Gastrocnemius medialis (tissue), 4 donors: ENCODE measurements at regions of chr4 and their contacts with region 1.

Region 1: DNA sequence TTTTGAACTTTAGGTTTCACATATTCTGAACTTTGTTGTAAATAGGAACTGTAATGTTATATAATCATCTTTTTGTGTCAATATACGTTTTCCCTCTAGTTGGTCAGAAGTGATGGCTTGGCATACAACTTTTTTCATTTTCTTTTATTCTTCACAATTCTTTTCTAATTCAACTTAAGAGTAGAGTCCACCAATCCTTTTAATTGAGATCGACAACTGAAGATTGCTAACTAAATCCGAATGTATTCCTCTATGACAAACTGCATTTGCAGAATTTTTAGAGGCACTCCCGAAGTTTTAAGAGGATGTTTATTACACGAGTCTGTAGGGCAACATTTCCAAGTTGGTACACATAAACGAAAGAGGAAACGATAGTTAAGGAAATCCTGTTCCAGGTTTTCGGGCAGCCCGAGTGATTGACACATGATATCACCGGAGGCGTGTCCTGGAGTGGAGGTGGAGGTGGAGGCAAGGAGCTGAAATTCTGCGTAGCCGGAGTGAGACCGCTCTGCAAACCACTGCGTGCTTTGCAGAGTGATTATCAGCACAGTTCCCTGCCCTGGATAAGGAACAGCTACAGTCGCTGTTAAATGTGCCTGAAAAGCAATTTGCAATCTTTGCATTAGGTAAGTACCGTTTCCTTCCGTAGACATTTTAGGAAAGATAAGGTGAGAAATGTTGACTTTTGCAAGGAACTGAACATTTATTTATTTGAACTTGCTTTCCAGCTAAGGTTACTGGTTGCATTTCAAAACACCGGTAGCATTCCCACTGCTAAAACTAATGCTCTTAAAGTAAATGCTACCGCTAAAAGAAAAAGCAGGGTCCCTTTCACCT is at the start of gene SPRY1:
- DNase-seq: peak; percentile 87 to 91
- ATAC-seq: peak; percentile 64 to 66
- H3K4me3 ChIP-seq: peak within 1 kb of the TSS; percentile 82 to 94 (median 88)
- H3K27ac ChIP-seq: peak within 1 kb of the TSS; percentile 91 to 98 (median 96)
- H3K4me1 ChIP-seq: peaks cover 6 to 11% of the 10 kb centered on the region in 2 donors
- H3K27me3 ChIP-seq: no peaks in the 10 kb centered on the region
- CTCF ChIP-seq: no peak
- POLR2A ChIP-seq: peak; percentile 65 to 88
- total RNA-seq, gene SPRY1: 32.8 to 72.2 (median 50.9) TPM

Region 2: GRCh38 chr4:123248085-123248659 is 148.4 kb before region 1 on chr4:
- in situ Hi-C with region 1: no loop called
- intact Hi-C with region 1: loop called (anchors 5 kb)
- DNase-seq: no peak
- ATAC-seq: peak in 1 of 2 donors; percentile 48
- H3K4me3 ChIP-seq: no peak overlapping the region
- H3K27ac ChIP-seq: peak overlapping the region in 1 of 4 donors; percentile 2
- H3K4me1 ChIP-seq: peaks cover 17 to 23% of the 10 kb centered on the region in 2 donors
- H3K27me3 ChIP-seq: no peaks in the 10 kb centered on the region
- CTCF ChIP-seq: no peak
- POLR2A ChIP-seq: no peak

Region 3: DNA sequence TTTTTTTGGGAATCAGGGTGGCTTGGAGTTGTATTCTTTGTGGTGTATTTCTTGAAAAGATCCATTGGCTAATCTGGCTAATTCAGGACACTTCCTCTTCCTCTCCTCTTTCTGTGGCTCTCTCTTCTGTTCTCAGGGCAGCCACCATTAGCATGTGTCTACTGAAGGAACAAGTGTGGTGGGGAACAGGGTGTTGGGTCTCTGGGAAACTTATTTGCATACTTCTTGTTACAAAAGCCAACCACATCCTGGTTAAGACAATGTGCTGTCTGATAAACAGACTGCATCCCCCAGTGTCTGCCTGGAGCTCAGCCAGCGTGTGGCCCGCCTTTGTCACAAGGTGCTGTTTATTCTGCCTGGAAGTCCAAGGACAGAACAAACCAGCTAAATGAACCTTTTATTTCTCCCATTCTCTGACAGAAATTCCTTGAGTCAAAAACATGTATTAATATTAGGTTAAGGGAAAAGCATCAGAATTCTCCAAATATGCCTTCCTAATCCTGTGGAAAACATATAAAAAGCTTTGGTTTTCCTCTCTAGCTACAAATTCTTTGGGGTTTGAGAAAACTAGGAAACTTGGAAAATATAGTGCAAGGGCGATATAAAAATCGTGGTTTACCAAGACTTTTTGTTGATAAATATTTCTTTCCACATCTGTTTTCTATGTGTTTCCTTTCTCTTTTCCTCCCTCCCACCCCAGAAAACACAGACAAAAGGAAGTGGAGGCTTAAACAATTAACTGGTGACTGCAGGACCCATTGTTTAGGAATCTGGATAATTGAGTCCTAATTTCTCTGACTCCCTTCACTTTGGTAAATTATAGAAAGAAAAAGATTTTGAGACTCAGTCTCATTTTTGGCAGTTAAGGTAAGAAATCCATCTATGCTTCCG is 203.6 kb after region 1 on chr4:
- in situ Hi-C with region 1: loop called in 1 of 4 experiments (anchors 10 kb)
- intact Hi-C with region 1: no loop called
- DNase-seq: peak; percentile 28 to 37
- ATAC-seq: peak; percentile 65 to 75
- H3K4me3 ChIP-seq: no peak overlapping the region
- H3K27ac ChIP-seq: peak overlapping the region; percentile 59 to 69 (median 63)
- H3K4me1 ChIP-seq: peaks cover 16 to 17% of the 10 kb centered on the region in 2 donors
- H3K27me3 ChIP-seq: no peaks in the 10 kb centered on the region
- CTCF ChIP-seq: no peak
- POLR2A ChIP-seq: no peak

Region 4: GRCh38 chr4:123671633-123672404 is 275.3 kb after region 1 on chr4:
- in situ Hi-C with region 1: loop called in 3 of 4 experiments (anchors 5 to 25 kb)
- intact Hi-C with region 1: loop called (anchors 2 kb)
- DNase-seq: no peak
- ATAC-seq: no peak
- H3K4me3 ChIP-seq: peak overlapping the region in 1 of 4 donors; percentile 6
- H3K27ac ChIP-seq: peak overlapping the region in 2 of 4 donors; percentile 15 to 70
- H3K4me1 ChIP-seq: peaks cover 12 to 22% of the 10 kb centered on the region in 2 donors
- H3K27me3 ChIP-seq: no peaks in the 10 kb centered on the region
- CTCF ChIP-seq: no peak
- POLR2A ChIP-seq: no peak

Region 5: DNA sequence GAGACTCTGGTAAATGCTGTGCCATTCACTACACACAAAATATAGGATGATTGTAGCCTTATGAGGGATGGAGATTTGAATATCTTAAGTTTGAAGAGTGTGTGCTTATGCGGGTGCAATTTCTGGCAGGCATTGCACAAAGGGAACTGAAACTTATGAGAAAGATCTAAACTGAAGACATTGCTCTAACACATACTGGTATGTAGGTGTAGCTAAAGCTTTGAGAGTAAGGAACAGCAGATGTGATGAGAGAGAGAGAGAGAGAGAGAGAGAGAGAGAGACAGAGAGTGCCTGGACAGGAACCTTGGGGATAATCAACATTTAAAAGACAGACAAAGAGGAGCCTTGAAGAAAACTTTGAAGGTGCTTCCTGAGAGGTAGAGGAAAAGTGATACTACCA is 379.7 kb after region 1 on chr4:
- in situ Hi-C with region 1: no loop called
- intact Hi-C with region 1: no loop called
- DNase-seq: no peak
- ATAC-seq: no peak
- H3K4me3 ChIP-seq: no peak overlapping the region
- H3K27ac ChIP-seq: peak overlapping the region in 3 of 4 donors; percentile 35 to 56 (median 37)
- H3K4me1 ChIP-seq: peaks cover 4 to 6% of the 10 kb centered on the region in 2 donors
- H3K27me3 ChIP-seq: no peaks in the 10 kb centered on the region
- CTCF ChIP-seq: no peak
- POLR2A ChIP-seq: no peak

Region 6: DNA sequence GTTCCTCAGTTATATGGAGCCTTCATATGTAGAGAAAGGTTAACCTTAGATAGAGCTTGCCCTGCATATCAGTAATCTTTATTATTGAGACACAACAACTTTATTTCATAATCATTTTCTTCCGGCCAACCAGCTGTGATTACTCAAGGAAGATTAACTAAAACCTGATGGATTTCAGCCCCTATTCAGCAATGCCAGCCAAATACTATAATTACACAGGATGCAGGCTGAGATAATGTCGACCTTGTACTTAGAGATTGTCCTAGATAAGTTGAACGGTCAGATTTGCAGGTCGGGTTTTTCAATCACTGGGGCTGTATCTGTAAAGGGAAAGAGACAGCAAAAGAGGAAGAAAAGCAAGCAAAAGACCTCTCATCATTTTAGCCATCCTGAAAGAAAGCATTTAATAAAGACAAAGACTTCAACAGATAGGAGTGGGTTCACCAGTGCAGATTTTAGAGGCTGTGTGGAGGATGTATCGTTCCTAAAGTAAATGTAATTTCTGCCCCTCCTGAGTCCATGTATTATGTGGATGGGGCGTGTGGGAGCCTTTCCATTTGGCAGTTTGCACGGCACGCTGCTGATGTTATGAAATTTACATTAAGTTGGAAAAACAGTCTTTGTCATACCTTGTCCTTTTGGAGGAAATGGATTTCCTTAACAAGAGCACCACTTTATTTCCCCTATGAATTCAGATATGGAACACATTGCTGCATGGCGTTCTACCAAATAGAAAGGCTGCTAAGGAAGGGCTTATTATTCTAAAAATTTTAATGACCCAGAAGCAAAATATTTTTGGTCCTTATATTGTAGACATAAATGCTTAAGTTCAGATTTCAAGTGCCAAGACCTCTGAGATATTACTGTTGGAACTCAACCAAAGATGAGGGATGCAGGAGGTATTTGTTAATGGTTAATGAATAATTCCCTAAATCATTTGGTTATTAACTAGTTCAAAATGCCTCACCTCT is 496.8 kb after region 1 on chr4:
- in situ Hi-C with region 1: no loop called
- intact Hi-C with region 1: loop called (anchors 10 kb)
- DNase-seq: peak in 1 of 2 donors; percentile 16
- ATAC-seq: peak; percentile 31 to 61
- H3K4me3 ChIP-seq: peak overlapping the region in 1 of 4 donors; percentile 7
- H3K27ac ChIP-seq: peak overlapping the region; percentile 55 to 73 (median 63)
- H3K4me1 ChIP-seq: peaks cover 49 to 56% of the 10 kb centered on the region in 2 donors
- H3K27me3 ChIP-seq: no peaks in the 10 kb centered on the region
- CTCF ChIP-seq: no peak
- POLR2A ChIP-seq: no peak

Region 7: DNA sequence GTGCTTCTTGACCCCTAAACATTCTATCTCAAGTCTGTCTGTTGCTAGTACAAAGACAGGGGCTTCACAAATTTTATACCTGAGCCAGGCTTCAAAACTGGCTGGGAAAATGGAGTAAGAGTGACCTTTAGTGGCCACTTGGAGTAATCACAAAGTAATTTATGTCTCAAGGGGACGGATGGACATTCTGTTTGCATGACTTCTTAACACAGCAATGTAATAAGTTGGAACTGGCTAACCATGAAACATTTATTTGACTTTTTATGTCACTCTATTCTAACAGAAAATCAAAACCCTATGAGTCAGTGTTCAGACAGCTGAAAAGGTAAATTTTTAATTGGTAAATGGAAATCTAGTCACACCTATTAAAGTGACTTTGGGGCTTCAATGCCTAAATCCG is 715.4 kb after region 1 on chr4:
- in situ Hi-C with region 1: loop called (anchors 10 to 25 kb)
- intact Hi-C with region 1: loop called (anchors 5 kb)
- DNase-seq: peak in 1 of 2 donors; percentile 16
- ATAC-seq: peak; percentile 91 to 97
- H3K4me3 ChIP-seq: no peak overlapping the region
- H3K27ac ChIP-seq: peak overlapping the region in 2 of 4 donors; percentile 17 to 39
- H3K4me1 ChIP-seq: peaks cover 4 to 11% of the 10 kb centered on the region in 2 donors
- H3K27me3 ChIP-seq: no peaks in the 10 kb centered on the region
- CTCF ChIP-seq: peak; percentile 57 to 73 (median 66)
- POLR2A ChIP-seq: no peak